Sciatic nerve (tissue), 2 donors: ENCODE measurements at regions of chr1 and their contacts with region 1.

Region 1: GRCh38 chr1:89632657-89633247 is at the start of gene LRRC8C:
- DNase-seq: peak; percentile 89
- ATAC-seq: peak; percentile 91
- total RNA-seq, gene LRRC8C: 19.6 TPM

Region 2: GRCh38 chr1:89524369-89525168 is 108.2 kb before region 1 on chr1 and contains the start of gene LRRC8B:
- intact Hi-C with region 1: loop called (anchors 10 kb)
- DNase-seq: peak; percentile 96
- ATAC-seq: peak; percentile 99
- total RNA-seq, gene LRRC8B: 21.9 TPM

Region 3: GRCh38 chr1:89762779-89763648 is 130.3 kb after region 1 on chr1:
- intact Hi-C with region 1: loop called (anchors 5 kb)
- DNase-seq: peak; percentile 91
- ATAC-seq: peak; percentile 98

Region 4: GRCh38 chr1:91104712-91105111 is 1472.0 kb after region 1 on chr1:
- intact Hi-C with region 1: no loop called
- DNase-seq: no peak
- ATAC-seq: no peak